ENCODE measurements at regions of chr5 and their contacts with region 1.

Region 1: DNA sequence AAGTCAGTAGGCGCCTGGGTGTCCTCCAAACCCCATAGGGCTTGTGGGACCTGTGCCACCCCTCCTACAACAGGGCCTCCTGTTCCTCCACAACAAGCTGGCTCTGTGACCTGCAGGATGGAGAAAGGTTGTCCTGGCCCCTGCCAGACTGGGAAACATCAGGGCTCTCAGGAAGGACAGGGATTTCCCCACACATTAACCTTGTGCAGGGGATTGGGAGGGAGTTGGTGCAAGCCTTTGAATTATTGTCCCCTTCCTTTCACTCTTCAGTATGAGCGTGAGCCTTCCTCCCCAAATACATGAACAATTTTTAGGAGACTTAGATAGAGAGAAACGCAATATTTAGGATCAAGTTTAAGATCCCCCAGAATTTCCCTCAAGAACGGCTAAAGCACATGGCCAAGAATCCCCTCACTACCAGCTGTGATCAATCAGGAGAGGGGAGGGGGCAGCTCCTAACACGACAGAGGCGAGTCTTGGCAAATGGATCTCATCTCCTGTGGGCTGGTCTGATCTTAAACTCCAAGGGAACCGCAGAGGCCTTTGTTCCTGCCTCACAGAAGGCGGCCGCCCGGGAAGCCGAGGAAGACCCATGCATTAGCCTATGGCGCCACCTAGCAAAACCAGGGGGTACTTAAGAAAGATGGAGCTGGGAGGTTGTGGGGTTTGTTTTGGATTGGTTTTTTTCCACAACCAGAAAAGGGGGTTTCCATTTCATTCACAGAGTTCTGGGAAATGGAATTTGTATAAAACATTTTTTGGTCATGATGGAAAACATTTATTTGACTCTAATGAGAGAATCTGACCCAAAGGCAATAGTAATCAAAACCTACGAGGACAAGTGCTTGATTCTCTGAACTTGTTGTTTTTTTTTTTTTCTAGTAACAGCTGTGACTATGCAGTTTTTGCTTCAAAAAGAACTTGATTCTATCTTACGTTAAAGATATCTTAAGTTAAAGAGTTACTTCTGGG is 36.1 kb upstream of the OSMR start:
- DNase-seq: peak; percentile 24
- H3K4me3 Mint-ChIP-seq: no peak overlapping the region
- H3K27ac Mint-ChIP-seq: no peak overlapping the region
- H3K4me1 Mint-ChIP-seq: no peaks in the 10 kb centered on the region
- H3K27me3 Mint-ChIP-seq: peaks cover 9% of the 10 kb centered on the region

Region 2: DNA sequence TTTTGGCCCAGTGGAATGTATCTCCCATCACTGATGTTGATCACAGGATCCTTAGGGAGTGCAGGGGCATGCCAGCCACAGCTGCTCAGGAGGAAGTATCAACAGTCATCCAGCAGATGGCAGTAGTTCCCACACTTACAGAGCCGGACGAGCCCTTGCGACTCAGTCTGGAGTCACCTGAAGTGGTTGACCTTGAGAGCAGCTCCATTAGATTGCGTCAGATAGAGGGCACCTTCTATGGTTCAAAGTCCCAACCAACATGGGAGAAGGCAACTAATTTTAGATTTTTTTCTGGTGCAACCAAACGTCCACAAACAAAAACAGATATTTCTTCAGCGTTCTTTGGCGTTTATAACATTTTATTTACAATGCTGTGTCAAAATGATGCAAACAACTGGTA is 426.8 kb before region 1 on chr5:
- intact Hi-C with region 1: loop called (anchors 1 kb)
- DNase-seq: peak; percentile 34
- H3K4me3 Mint-ChIP-seq: no peak overlapping the region
- H3K27ac Mint-ChIP-seq: no peak overlapping the region
- H3K4me1 Mint-ChIP-seq: no peaks in the 10 kb centered on the region
- H3K27me3 Mint-ChIP-seq: peaks cover 17% of the 10 kb centered on the region

Region 3: DNA sequence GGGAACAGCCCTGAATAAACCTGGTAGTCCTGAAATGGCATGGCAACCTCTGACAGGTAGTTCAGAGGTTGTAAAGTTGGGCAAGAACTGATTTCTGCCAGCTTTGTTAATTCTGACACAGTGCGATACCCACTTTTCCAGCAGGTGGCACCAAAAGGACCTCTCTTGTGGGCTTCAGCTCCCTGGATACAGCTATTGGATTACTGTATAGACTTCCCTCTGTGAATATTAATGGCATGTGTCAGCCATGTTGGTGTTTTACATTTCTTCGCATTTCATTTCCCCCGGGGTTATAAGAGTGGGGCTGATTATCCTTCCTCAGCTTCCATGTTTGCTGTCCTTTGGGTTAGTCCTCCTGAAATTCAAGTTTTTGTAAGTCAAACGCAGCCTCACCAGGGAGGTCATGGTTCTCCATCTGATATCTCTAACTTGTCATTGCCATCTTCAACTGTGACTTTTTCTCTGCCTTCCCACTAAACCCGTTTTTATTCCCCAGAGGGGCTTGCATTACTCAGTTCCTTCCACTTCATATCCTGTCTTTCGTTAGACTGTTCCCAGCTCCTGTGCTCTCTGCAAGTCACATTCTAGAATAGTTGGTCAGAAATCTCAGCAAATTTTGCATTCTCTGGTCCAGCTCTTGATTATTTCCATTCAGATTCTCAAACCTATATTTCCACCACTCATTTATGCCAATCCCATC is 388.8 kb before region 1 on chr5:
- intact Hi-C with region 1: loop called (anchors 1 kb)
- DNase-seq: peak; percentile 4
- H3K4me3 Mint-ChIP-seq: no peak overlapping the region
- H3K27ac Mint-ChIP-seq: no peak overlapping the region
- H3K4me1 Mint-ChIP-seq: no peaks in the 10 kb centered on the region
- H3K27me3 Mint-ChIP-seq: peaks cover 26% of the 10 kb centered on the region

Region 4: DNA sequence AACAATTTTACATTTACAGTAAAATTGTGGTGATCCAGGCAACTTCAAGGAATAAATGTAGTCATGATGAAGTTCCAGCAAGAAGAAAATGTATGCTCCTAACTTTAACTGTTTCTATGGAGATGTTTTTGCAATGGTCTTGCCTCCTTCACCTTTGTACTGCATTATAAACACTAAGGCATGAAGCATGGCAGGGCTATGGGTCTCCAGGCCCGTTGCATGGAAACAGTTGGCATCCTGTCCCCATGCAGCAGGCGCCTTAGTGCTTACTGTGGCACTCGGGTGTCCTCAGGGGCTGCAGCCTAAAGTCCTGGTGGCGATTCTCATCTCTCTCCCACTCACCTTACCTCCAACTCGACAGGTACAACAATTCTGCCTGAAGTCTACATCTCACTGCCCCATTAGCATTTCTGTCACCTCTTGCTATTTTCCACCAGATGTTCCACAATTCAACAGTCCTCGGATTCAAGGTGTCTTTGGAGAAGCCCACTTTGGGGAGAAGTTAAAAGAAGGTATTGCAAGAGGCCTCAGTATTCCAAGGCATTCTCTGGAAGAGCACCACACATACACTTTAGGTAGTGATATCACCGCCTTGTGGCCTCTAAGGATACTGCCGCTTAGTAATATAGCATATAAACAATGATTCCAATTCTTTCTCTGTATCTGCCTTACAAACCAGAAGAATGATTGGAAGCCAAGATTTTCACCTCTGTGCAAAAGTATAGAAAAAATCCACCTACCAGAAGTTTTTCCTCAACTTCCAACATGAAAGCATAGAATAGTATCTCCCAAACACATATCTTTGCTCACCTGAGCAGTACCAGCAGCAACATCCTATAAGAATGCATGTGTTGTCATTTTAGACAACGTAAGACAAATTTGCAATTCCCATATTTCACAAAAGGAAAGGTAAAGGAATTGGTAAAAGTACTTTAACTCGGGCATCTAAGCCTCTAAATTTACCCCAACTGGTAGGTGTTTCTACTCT is 258.4 kb before region 1 on chr5:
- intact Hi-C with region 1: loop called (anchors 2 kb)
- DNase-seq: no peak
- H3K4me3 Mint-ChIP-seq: no peak overlapping the region
- H3K27ac Mint-ChIP-seq: no peak overlapping the region
- H3K4me1 Mint-ChIP-seq: peaks cover 5% of the 10 kb centered on the region
- H3K27me3 Mint-ChIP-seq: peaks cover 46% of the 10 kb centered on the region

Region 5: DNA sequence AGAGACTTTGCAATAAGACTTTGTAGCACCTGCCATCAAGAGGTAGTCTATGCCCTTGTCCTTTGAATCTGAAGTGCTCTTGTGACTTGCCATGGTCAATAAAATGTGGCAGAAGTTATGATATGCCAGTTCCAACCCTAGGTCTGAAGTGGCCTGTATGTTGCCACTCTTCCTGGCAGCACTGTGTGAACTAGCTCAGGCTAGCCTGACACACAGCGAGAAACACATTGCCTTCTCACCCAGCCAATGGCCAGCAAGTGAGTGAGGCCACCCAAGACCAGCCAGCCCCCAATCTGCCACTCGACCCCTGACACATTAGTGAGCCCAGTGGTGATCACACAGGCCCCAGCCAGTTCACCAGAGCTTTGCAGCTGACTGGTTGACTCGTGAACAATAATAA is 16.6 kb before region 1 on chr5:
- intact Hi-C with region 1: no loop called
- DNase-seq: no peak
- H3K4me3 Mint-ChIP-seq: no peak overlapping the region
- H3K27ac Mint-ChIP-seq: no peak overlapping the region
- H3K4me1 Mint-ChIP-seq: no peaks in the 10 kb centered on the region
- H3K27me3 Mint-ChIP-seq: no peaks in the 10 kb centered on the region

Region 6: GRCh38 chr5:38853753-38854463 is 44.2 kb after region 1 on chr5:
- intact Hi-C with region 1: no loop called
- DNase-seq: no peak
- H3K4me3 Mint-ChIP-seq: no peak overlapping the region
- H3K27ac Mint-ChIP-seq: no peak overlapping the region
- H3K4me1 Mint-ChIP-seq: no peaks in the 10 kb centered on the region
- H3K27me3 Mint-ChIP-seq: peaks cover 18% of the 10 kb centered on the region

Region 7: GRCh38 chr5:39005566-39006232 is 196.0 kb after region 1 on chr5:
- intact Hi-C with region 1: no loop called
- DNase-seq: no peak
- H3K4me3 Mint-ChIP-seq: no peak overlapping the region
- H3K27ac Mint-ChIP-seq: no peak overlapping the region
- H3K4me1 Mint-ChIP-seq: peaks cover 22% of the 10 kb centered on the region
- H3K27me3 Mint-ChIP-seq: no peaks in the 10 kb centered on the region